Right ventricle myocardium superior (tissue), 1 donor: ENCODE measurements at regions of chr7 and their contacts with region 1.

Region 1: DNA sequence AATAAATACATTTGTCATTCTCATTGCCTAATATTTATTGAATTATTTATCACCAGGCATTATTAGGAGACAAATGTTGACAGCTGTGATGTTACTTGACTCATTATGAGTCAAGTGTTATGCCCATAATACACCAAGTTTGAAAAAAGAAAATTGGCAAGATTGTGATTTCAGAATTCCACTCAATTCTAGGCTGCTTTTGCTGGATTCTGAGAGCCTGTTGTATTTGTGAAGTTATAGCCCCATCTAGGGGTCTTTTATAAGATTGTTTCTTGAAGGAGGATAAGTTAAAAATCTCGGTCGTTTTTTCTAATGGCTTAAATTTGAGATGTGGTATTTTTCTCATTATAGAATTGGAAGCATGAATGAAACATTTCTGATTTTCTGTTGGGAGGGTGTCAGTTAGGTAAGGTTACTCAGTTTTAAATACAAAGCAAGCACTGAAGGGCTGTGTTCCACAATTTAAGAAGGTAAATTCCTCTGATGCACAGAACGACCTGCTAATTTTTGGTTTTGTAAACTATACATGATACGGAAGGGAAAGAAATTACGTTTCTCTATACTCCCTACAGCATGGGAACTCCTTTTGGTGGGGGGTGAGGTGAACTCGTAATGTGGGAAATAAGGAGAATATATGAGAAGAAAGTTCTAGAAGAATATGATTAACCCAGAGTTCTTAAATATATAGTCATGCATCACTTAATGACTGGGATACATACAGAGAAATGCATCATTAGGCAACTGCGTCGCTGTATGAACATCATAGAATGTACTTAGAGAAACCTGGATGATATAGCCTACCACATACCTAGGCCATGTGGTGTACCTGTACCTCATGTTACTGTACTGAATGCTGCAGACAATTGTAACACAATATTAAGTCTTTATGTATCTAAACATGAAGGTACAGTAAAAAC is 2.6 kb downstream of the STK31 start:
- DNase-seq: no peak
- ATAC-seq: peak; percentile 49

Region 2: DNA sequence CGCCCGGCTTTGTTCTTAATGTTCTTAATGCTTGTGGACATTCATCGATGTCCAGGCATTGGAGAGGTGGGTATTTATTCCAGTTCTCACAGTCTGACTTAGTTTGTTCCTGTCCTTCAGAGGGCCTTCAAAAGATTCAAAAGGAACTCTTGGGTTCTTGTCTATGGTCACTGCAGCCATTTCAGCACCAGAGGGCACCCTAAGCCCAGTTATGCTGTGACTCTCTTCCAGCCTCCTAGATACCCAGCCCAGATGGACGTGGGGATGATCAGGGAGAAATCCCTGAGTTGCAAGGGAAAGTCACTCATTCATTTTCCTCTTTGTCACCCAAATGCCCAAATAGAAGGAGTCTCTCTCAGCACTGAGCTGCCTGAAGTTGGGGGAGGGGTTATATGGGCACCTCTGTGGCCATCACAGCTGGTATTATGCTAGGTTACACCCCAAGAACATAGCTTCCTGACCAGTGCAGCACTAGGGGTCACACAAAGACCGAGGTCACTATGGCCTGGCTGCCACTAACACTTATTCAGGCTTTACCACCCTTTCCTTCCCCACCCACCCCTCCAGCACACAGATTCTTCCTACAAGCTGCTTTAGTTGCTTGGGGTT is 141.9 kb before region 1 on chr7:
- intact Hi-C with region 1: loop called (anchors 2 kb)
- DNase-seq: peak; percentile 72
- ATAC-seq: peak; percentile 96

Region 3: DNA sequence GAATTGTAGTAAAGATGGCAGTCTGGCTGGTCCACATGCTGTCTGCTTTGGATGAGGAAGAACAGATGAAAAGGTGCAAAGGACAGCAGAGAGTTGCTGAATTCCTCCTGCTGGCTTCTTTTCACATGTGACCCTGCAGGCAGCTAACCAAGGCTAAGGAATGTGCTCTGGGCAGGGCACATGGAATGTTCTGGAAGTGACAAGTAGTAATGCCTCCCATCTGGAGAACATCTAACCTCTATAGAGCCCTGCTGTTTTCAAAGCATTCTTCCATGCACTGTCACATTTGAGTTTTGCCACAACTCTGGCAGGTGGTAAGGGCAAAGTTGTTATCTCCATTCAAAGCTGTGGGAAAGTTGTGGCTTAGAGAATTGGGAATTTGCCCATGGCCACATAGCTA is 206.2 kb after region 1 on chr7:
- intact Hi-C with region 1: no loop called
- DNase-seq: no peak
- ATAC-seq: no peak

Region 4: DNA sequence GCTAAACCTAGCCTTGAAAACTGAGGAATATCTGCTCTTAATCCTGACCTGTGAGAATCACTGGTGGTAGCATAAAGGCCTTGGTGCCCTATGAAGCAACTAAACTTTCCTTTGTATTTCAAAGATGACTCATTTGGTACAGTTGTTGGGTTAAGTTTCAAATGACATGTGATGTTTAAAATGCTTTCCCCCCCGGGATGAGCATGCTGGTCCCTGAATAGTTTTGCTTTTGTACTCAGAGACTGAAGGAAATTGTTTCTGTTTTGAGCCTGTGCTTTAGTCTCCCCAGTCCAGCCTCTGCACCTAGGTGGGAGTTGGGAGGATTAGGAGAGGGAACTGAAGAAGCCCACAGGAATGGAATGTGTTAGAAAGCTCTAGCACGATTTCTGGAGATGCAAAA is 312.5 kb after region 1 on chr7:
- intact Hi-C with region 1: no loop called
- DNase-seq: no peak
- ATAC-seq: no peak